Heart right ventricle (tissue), 16 donors: ENCODE measurements at regions of chr11 and their contacts with region 1.

Region 1: DNA sequence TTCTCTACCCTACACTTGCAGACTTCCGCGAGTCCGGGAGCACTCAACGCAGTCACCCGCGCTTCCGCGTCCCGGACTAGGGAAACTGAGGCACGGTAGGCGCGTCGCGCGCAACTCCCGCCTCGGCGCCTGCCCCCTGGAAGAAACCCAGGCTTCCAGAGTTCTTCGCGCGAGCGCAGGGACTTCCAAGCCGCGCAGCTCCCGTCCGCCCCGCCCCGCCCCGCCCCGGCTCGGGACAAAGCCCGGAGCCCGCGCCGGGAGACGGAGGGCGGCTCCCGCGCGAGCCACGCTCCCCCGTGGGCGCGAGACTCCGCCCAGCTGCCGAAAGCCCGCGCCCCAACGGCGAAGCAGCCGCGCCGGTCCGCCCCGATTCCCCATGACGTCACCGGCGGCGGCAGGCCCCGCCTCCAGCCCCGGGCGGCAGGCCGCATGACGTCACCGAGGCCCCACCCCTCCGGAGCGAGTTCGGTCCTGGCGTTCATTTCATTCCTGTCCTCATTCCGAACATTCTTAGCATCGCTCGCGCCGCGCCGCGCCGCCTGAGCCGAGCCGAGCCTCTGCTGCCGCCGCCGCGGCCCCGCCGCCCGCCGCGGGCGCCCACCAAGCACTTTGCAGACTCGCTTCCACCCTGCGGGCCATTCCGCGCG is at the start of gene TEAD1:
- DNase-seq: peak; percentile 96 to 98
- ATAC-seq: peak; percentile 93 to 99 (median 96)
- H3K4me3 ChIP-seq: peak within 1 kb of the TSS; percentile 54 to 98 (median 74)
- H3K27ac ChIP-seq: peak within 1 kb of the TSS; percentile 79 to 99 (median 95)
- H3K4me1 ChIP-seq: peaks cover 0 to 42% (median 31%) of the 10 kb centered on the region in 9 donors
- H3K27me3 ChIP-seq: peaks cover 0 to 58% (median 0%) of the 10 kb centered on the region in 7 donors
- CTCF ChIP-seq: no peak
- total RNA-seq, gene TEAD1: 107 to 138 (median 117) TPM

Region 2: DNA sequence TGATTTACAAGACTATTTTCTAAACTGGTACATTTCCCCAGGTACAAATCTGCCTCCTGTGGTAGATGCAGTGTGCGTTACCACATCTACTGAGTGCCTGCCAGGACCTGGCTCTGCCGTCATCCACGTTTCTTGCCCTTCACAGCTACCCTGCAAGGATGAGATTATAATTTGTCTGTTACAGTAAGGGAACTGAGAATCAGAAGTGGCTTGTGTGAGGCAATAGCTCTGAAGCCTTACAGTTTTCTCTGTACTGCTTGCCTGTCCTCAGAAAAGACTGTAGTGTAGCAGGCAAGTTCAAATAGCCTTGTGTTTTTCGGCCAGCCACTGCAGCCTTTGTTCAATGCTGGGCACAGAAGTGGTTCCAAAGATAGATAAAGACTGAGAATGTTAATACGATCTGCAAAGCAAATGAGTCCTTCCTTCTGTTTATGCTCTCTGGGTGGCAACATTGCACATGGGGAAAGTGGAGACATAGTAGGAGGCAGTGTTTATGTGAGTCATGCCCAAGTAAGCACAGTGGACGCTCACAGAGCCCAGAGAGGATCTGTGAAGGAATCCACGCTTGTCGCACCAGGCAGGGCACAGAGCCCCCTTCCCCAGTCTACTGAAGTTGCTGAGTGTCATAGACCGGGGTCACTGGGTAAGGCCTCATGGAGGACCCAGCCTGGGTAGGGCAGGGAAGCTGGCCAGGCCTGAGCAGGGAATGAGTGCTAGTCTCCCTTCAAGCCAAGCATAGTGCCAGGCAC is 514.5 kb before region 1 on chr11:
- intact Hi-C with region 1: no loop called
- DNase-seq: no peak
- ATAC-seq: peak in 7 of 8 donors; percentile 23 to 68 (median 48)
- H3K4me3 ChIP-seq: no peak overlapping the region
- H3K27ac ChIP-seq: peak overlapping the region; percentile 70 to 95 (median 88)
- H3K4me1 ChIP-seq: peaks cover 28 to 91% (median 83%) of the 10 kb centered on the region in 9 donors
- H3K27me3 ChIP-seq: no peaks in the 10 kb centered on the region
- CTCF ChIP-seq: peak in 2 of 9 donors; percentile 11 to 17

Region 3: DNA sequence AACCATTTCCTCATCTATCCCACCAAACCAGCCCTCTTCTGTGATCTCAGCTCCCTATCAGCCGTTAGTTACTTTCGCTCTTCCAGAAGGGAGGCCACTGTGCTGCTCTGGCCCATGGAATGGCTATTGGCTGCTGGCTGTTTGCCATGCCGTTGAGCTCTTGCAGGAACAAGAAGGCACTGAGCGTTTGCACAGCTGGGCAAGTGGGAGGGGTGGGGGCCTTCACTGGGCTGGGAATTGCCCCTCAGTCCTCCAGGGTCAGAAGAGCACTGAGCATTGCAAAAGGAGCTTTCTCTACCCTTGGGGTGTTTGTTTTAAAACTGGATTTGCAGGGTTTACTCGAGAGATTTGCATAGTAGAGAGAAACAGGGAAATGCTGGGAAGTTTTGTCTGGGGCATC is 425.7 kb before region 1 on chr11:
- intact Hi-C with region 1: no loop called
- DNase-seq: peak; percentile 72 to 81
- ATAC-seq: peak; percentile 52 to 78 (median 69)
- H3K4me3 ChIP-seq: no peak overlapping the region
- H3K27ac ChIP-seq: peak overlapping the region in 8 of 10 donors; percentile 9 to 71 (median 57)
- H3K4me1 ChIP-seq: peaks cover 7 to 70% (median 49%) of the 10 kb centered on the region in 9 donors
- H3K27me3 ChIP-seq: no peaks in the 10 kb centered on the region
- CTCF ChIP-seq: no peak

Region 4: DNA sequence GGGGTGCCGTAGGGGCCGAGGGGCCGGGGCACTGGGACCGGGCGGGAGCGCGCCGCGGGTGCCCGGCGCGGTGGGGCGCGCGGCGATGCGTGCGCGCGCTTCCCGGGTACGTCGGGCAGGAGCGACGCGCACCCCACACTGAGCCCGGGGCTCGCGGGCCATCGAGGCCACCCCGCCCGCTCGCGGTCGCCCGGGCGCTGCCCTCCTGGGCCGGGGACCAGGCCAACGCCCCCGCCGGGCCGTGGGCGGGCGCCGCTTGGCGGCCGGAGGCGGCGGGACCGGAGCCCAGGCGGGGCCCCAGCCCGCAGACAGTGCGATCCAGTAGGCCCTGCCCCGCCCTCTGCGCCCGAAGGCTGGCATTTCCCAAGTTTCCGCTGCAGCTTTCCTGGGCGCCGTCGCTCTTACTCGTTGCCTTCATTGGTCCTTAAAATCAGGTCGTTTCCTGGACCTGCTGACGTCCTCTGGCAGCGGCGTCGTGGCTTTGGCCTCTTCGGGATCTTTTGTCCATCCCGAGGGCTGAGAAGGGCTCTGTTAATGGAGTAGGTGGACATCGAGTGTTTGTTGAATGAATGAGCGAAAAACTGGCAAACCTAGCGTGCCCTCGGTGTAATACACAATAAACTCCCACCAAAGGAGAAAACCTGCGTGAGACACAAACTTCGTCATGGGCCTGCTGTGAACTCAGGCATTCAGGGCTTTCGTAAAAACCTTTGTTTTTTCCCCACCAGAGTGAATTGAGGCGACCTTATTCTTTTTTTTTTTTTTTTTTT is 296.0 kb before region 1 on chr11:
- intact Hi-C with region 1: loop called in 1 of 10 experiments (anchors 2 kb)
- DNase-seq: peak; percentile 51 to 74
- ATAC-seq: peak; percentile 54 to 88 (median 68)
- H3K4me3 ChIP-seq: peak overlapping the region; percentile 56 to 97 (median 72)
- H3K27ac ChIP-seq: peak overlapping the region; percentile 93 to 99 (median 98)
- H3K4me1 ChIP-seq: peaks cover 5 to 76% (median 49%) of the 10 kb centered on the region in 9 donors
- H3K27me3 ChIP-seq: peaks cover 0 to 28% (median 0%) of the 10 kb centered on the region in 7 donors
- CTCF ChIP-seq: peak in 4 of 9 donors; percentile 18 to 43 (median 34)

Region 5: GRCh38 chr11:12599408-12600143 is 74.5 kb before region 1 on chr11:
- intact Hi-C with region 1: loop called in 2 of 10 experiments (anchors 5 to 10 kb)
- DNase-seq: peak; percentile 22 to 57
- ATAC-seq: peak in 7 of 8 donors; percentile 41 to 72 (median 52)
- H3K4me3 ChIP-seq: no peak overlapping the region
- H3K27ac ChIP-seq: no peak overlapping the region
- H3K4me1 ChIP-seq: peaks cover 0 to 36% (median 13%) of the 10 kb centered on the region in 9 donors
- H3K27me3 ChIP-seq: no peaks in the 10 kb centered on the region
- CTCF ChIP-seq: peak; percentile 46 to 78 (median 68)

Region 6: GRCh38 chr11:12693479-12694181 is 19.6 kb after region 1 on chr11:
- intact Hi-C with region 1: loop called in 2 of 10 experiments (anchors 1 to 2 kb)
- DNase-seq: peak in 1 of 2 donors; percentile 68
- ATAC-seq: peak; percentile 73 to 92 (median 82)
- H3K4me3 ChIP-seq: peak overlapping the region in 6 of 10 donors; percentile 4 to 35 (median 22)
- H3K27ac ChIP-seq: peak overlapping the region; percentile 86 to 95 (median 89)
- H3K4me1 ChIP-seq: peaks cover 33 to 84% (median 71%) of the 10 kb centered on the region in 9 donors
- H3K27me3 ChIP-seq: peaks cover 0 to 46% (median 0%) of the 10 kb centered on the region in 7 donors
- CTCF ChIP-seq: peak in 1 of 9 donors; percentile 5

Region 7: GRCh38 chr11:12827929-12828812 is 154.1 kb after region 1 on chr11:
- intact Hi-C with region 1: loop called in 3 of 10 experiments (anchors 5 kb)
- DNase-seq: peak in 1 of 2 donors; percentile 31
- ATAC-seq: peak; percentile 63 to 84 (median 80)
- H3K4me3 ChIP-seq: peak overlapping the region in 9 of 10 donors; percentile 19 to 58 (median 51)
- H3K27ac ChIP-seq: peak overlapping the region in 9 of 10 donors; percentile 36 to 80 (median 58)
- H3K4me1 ChIP-seq: peaks cover 3 to 63% (median 47%) of the 10 kb centered on the region in 9 donors
- H3K27me3 ChIP-seq: peaks cover 0 to 21% (median 0%) of the 10 kb centered on the region in 7 donors
- CTCF ChIP-seq: no peak

Region 8: GRCh38 chr11:12893787-12894672 is 220.0 kb after region 1 on chr11:
- intact Hi-C with region 1: loop called in 8 of 10 experiments (anchors 2 to 10 kb)
- DNase-seq: peak; percentile 60 to 66
- ATAC-seq: peak in 3 of 8 donors; percentile 23 to 31 (median 30)
- H3K4me3 ChIP-seq: no peak overlapping the region
- H3K27ac ChIP-seq: peak overlapping the region in 5 of 10 donors; percentile 12 to 50 (median 25)
- H3K4me1 ChIP-seq: peaks cover 10 to 53% (median 33%) of the 10 kb centered on the region in 9 donors
- H3K27me3 ChIP-seq: no peaks in the 10 kb centered on the region
- CTCF ChIP-seq: peak; percentile 72 to 96 (median 90)